ENCODE measurements at regions of chr1 and their contacts with region 1.

Region 1: DNA sequence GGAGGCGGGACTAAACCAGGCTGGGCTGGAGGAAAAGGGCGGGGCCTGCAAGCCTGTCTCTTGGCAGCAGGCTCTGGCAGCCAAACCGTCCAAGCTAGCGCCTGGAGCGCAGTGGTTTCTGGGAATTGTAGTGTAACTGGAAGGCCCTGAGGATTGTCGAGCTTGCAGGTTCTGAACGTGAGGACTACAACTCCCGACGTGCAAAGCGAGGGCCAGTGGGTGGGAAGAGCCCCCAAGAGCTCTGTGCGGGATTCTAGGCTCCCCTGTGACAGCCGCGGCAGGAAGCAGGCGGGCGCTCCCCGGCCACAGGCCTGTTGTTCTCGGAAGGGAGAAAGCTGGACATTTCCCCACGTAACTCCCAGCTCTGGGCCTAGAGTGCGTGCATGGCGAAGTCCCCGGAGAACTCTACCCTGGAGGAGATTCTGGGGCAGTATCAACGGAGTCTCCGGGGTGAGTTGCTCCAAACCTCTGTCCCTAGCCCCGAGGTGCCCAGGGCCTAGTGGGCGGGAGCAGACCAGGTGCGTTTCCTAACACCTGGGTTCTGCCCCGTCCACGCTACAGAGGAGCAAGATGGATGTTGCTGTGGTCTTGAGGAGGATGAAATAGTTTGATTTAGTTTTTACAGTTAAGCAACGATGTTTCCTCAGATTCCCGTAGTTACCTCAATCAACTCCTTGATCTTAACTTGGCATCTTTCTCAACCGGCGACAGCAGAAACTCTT is at the start of gene SDCCAG8:
- DNase-seq: peak; percentile 85 to 98
- ATAC-seq: peak; percentile 80 to 92 (median 82)
- H3K4me3 ChIP-seq: peak within 1 kb of the TSS; percentile 83
- H3K4me3 Mint-ChIP-seq: peak within 1 kb of the TSS; percentile 99
- H3K27ac ChIP-seq: peak within 1 kb of the TSS; percentile 89
- H3K27ac Mint-ChIP-seq: peak within 1 kb of the TSS; percentile 97 to 98
- H3K4me1 ChIP-seq: peaks cover 18% of the 10 kb centered on the region
- H3K4me1 Mint-ChIP-seq: peaks cover 24 to 35% of the 10 kb centered on the region in 2 donors
- H3K27me3 ChIP-seq: no peaks in the 10 kb centered on the region
- H3K27me3 Mint-ChIP-seq: no peaks in the 10 kb centered on the region
- CTCF ChIP-seq: no peak
- total RNA-seq, gene SDCCAG8: 17.8 to 28.3 (median 21.2) TPM

Region 2: DNA sequence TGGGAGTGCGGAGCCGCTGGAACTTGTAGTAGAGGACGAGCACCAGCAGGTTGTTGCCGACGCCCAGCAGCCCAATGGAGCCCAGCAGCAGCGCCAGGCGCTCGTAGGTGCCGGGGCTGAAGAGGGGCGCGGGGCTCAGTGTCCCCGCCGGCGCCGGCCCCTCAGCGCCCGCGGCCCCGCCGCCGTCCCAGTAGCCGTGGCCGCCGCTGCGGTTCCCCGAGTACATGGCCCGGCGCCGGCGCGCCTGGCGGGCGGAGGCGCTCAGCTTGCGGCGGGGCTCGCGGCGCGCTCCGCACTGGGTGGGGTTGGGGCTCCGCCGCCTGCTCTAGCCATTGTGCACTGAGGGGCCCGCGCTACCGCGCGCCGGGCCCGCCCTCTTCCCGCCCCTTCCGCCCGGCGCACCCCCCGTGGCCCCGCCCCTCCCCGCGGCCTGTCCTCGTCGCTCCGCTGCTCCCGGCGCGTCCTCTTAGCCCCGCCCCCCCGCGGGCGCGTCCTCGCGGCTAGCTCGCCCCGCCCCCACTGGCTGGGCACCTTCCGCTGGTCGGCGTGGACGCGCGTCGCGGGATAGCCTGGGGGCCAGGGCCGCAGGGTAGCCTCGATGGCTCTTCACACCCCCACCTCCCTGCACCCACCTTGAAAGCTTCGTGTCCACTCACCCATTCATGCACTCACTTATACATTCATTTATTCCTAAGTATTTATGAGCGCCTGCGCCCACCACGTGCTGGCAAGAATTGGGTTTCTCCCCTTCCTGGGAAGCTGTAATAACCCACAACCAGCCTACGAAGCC is 1615.7 kb before region 1 on chr1 and contains the starts of genes CHML and OPN3:
- intact Hi-C with region 1: loop called (anchors 5 kb)
- DNase-seq: peak; percentile 87 to 94
- ATAC-seq: peak; percentile 94 to 98 (median 96)
- H3K4me3 ChIP-seq: peak within 1 kb of the TSS; percentile 97
- H3K4me3 Mint-ChIP-seq: peak within 1 kb of the TSS; percentile 82
- H3K27ac ChIP-seq: peak within 1 kb of the TSS; percentile 79
- H3K27ac Mint-ChIP-seq: peak within 1 kb of the TSS; percentile 44 to 61
- H3K4me1 ChIP-seq: peaks cover 5% of the 10 kb centered on the region
- H3K4me1 Mint-ChIP-seq: peaks cover 22 to 31% of the 10 kb centered on the region in 2 donors
- H3K27me3 ChIP-seq: no peaks in the 10 kb centered on the region
- H3K27me3 Mint-ChIP-seq: no peaks in the 10 kb centered on the region
- CTCF ChIP-seq: no peak
- total RNA-seq, gene CHML: 6.8 to 11.8 (median 7.8) TPM
- total RNA-seq, gene OPN3: 3.9 to 5.1 (median 4.1) TPM

Region 3: GRCh38 chr1:243343970-243344937 is 88.3 kb after region 1 on chr1:
- intact Hi-C with region 1: no loop called
- DNase-seq: peak in 1 of 2 donors; percentile 71
- ATAC-seq: peak in 2 of 3 donors; percentile 57 to 67
- H3K4me3 ChIP-seq: no peak overlapping the region
- H3K4me3 Mint-ChIP-seq: no peak overlapping the region
- H3K27ac ChIP-seq: no peak overlapping the region
- H3K27ac Mint-ChIP-seq: no peak overlapping the region
- H3K4me1 ChIP-seq: no peaks in the 10 kb centered on the region
- H3K4me1 Mint-ChIP-seq: peaks cover 0 to 5% of the 10 kb centered on the region in 2 donors
- H3K27me3 ChIP-seq: no peaks in the 10 kb centered on the region
- H3K27me3 Mint-ChIP-seq: no peaks in the 10 kb centered on the region
- CTCF ChIP-seq: peak; percentile 95

Region 4: GRCh38 chr1:243596431-243597062 is 340.6 kb after region 1 on chr1:
- intact Hi-C with region 1: loop called (anchors 5 kb)
- DNase-seq: peak in 1 of 2 donors; percentile 66
- ATAC-seq: peak; percentile 78 to 93 (median 86)
- H3K4me3 ChIP-seq: no peak overlapping the region
- H3K4me3 Mint-ChIP-seq: peak overlapping the region; percentile 67
- H3K27ac ChIP-seq: peak overlapping the region; percentile 80
- H3K27ac Mint-ChIP-seq: peak overlapping the region; percentile 84 to 90
- H3K4me1 ChIP-seq: peaks cover 4% of the 10 kb centered on the region
- H3K4me1 Mint-ChIP-seq: peaks cover 26 to 31% of the 10 kb centered on the region in 2 donors
- H3K27me3 ChIP-seq: no peaks in the 10 kb centered on the region
- H3K27me3 Mint-ChIP-seq: no peaks in the 10 kb centered on the region
- CTCF ChIP-seq: no peak

Region 5: DNA sequence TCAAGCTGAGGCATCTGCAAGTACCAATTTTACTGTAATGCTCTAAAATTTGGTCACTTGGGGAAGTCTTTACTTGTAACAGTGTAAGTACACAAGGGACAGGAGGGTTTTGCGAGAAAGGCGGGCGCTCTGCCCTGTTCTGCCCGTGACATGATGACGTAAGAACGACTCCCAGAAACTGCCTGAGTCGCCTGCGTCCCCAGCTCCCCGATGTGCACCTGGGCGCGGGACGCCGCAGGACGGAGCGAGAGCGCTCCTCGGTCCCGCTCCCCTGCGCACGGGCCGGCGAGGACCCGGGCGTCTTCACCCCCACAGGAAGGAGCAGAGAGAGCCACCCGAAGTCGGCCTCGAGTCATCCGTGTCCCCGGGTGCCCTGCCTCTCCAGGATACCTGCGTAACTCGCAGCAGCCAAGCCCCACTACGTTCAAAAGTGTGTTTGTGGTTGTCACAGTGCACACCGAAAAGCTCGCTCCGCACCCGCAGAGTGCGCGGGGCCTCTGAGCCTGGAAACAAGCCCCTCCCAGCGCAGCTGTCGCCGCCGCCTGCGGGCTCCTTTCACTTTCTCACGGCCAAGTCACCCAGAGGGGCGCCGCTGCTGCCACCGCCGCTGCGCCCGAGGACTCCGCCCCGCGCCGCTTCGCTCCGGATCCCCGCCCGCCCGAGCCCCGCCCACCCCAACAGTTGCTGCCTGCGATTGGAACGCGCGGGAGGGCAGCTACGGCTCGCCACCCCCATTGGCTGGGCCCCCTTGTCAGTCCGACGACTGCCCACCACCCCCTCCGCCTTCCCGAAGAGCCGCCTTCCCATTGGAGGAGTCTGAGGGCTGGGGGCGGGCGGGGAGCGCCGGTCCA is 791.9 kb after region 1 on chr1:
- intact Hi-C with region 1: loop called (anchors 2 kb)
- DNase-seq: peak; percentile 90 to 98
- ATAC-seq: peak; percentile 80 to 94 (median 85)
- H3K4me3 ChIP-seq: peak overlapping the region; percentile 99
- H3K4me3 Mint-ChIP-seq: peak overlapping the region; percentile 97
- H3K27ac ChIP-seq: peak overlapping the region; percentile 100
- H3K27ac Mint-ChIP-seq: peak overlapping the region; percentile 94 to 97
- H3K4me1 ChIP-seq: peaks cover 15% of the 10 kb centered on the region
- H3K4me1 Mint-ChIP-seq: peaks cover 25 to 35% of the 10 kb centered on the region in 2 donors
- H3K27me3 ChIP-seq: no peaks in the 10 kb centered on the region
- H3K27me3 Mint-ChIP-seq: peaks cover 4 to 30% of the 10 kb centered on the region in 2 donors
- CTCF ChIP-seq: no peak

Region 6: GRCh38 chr1:244451951-244452795 is 1196.2 kb after region 1 on chr1:
- intact Hi-C with region 1: loop called (anchors 2 kb)
- DNase-seq: peak; percentile 98 to 100
- ATAC-seq: peak; percentile 85 to 96 (median 90)
- H3K4me3 ChIP-seq: peak overlapping the region; percentile 72
- H3K4me3 Mint-ChIP-seq: peak overlapping the region; percentile 80
- H3K27ac ChIP-seq: peak overlapping the region; percentile 92
- H3K27ac Mint-ChIP-seq: peak overlapping the region; percentile 85 to 88
- H3K4me1 ChIP-seq: peaks cover 9% of the 10 kb centered on the region
- H3K4me1 Mint-ChIP-seq: peaks cover 33 to 37% of the 10 kb centered on the region in 2 donors
- H3K27me3 ChIP-seq: no peaks in the 10 kb centered on the region
- H3K27me3 Mint-ChIP-seq: no peaks in the 10 kb centered on the region
- CTCF ChIP-seq: peak; percentile 31

Region 7: GRCh38 chr1:244970661-244971551 is 1715.0 kb after region 1 on chr1:
- intact Hi-C with region 1: loop called (anchors 2 kb)
- DNase-seq: peak; percentile 88 to 96
- ATAC-seq: peak; percentile 79 to 92 (median 79)
- H3K4me3 ChIP-seq: peak overlapping the region; percentile 85
- H3K4me3 Mint-ChIP-seq: peak overlapping the region; percentile 95
- H3K27ac ChIP-seq: peak overlapping the region; percentile 100
- H3K27ac Mint-ChIP-seq: peak overlapping the region; percentile 98 to 99
- H3K4me1 ChIP-seq: peaks cover 5% of the 10 kb centered on the region
- H3K4me1 Mint-ChIP-seq: peaks cover 13 to 14% of the 10 kb centered on the region in 2 donors
- H3K27me3 ChIP-seq: no peaks in the 10 kb centered on the region
- H3K27me3 Mint-ChIP-seq: no peaks in the 10 kb centered on the region
- CTCF ChIP-seq: peak; percentile 19